A549 (cell line): ENCODE measurements at regions of chr17 and their contacts with region 1.

Region 1: DNA sequence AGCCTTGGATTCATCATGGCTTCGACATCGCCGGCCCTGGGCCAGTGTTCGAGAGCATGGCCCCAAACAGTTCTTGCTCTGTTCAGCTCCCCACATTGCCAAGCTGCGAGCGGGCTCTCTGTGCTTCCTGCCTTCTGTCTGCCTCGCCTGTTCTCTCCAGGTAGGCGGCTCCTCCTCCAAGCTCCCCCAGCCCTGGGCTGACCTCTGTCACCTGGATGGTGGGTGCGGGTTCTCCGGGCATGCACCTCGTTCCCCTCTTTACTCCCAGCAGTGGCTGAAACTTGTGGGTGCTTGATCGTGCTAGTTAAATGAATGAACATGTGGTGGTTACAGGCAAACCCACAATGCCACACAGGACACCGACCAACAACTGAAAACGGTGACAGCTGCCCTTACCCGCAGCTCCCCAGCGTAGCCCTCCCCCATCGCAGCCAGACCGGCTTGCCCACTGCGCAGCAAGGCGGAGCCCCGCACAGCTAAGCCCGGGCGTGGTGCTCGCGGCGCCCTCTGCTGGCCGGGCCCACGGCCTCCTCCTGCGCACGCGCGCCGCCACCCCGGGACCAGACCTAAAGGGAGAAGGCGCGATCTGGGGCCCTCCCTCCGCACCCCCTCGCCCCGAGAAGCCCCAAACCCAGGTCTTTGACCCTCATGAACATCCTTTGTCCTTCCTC is 23.0 kb upstream of the EIF1 start:
- DNase-seq: peak; percentile 89 to 100
- ATAC-seq: peak; percentile 72 to 91
- H3K4me3 ChIP-seq: peak overlapping the region; percentile 47
- H3K27ac ChIP-seq: peak overlapping the region; percentile 86 to 92
- H3K4me1 ChIP-seq: peaks cover 23% of the 10 kb centered on the region
- CTCF ChIP-seq: peak; percentile 98
- EP300 ChIP-seq: no peak
- POLR2A ChIP-seq: peak; percentile 74
- RAD21 ChIP-seq: peak in 1 of 2 experiments; percentile 46; a peak in 2 of 5 replicates

Region 2: DNA sequence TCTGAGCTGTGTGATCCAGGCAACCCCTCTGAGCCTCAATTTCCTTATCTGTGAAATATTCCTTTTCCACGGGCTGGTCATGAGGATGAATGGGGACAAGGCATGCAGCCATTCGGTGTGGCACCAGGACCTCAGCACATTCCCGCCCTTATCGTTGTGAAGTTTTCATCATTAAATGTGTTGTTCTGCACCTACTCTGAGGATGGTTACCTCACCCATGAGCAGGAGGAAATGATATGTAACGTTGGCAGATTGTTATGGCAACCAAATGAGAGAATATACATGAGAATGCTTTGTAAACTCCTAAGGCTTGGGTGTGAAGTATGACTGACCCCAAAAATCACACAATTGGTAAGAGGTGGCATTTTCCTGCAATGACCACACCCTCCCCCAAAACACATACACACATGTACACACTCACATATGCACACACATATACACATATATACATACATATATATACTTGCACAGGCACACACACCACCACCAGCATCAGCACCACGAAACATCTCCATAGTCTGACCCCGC is 1057.6 kb before region 1 on chr17:
- CTCF ChIA-PET with region 1: interaction called, 53 read pairs
- POLR2A ChIA-PET with region 1: no interaction called
- DNase-seq: no peak
- ATAC-seq: no peak
- H3K4me3 ChIP-seq: no peak overlapping the region
- H3K27ac ChIP-seq: no peak overlapping the region
- H3K4me1 ChIP-seq: no peaks in the 10 kb centered on the region
- CTCF ChIP-seq: no peak
- EP300 ChIP-seq: no peak
- POLR2A ChIP-seq: no peak
- RAD21 ChIP-seq: no peak

Region 3: DNA sequence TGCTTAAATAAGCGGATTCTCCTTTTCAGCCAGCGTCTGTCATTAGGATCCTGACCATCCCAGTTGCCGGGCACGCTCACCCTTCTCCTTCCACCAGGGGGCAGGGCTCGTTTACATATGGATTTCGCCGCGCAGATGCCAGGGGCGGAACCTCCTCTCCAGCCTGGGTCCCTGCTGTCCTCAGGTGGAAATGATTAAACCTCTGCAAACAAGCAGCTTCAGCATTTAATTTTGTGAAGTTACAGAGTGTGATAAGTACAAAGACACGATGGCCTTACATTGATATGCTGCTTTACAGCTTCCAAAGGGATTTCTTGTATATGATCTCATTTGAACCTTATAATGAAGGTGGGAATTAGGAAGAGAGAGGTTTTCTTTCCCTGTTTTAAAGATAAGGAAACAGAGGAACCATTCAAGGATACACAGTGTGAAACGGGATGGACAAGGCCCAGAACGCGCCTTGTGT is 862.1 kb before region 1 on chr17:
- CTCF ChIA-PET with region 1: interaction called, 282 read pairs
- POLR2A ChIA-PET with region 1: no interaction called
- DNase-seq: peak; percentile 88 to 96
- ATAC-seq: peak; percentile 99
- H3K4me3 ChIP-seq: no peak overlapping the region
- H3K27ac ChIP-seq: peak overlapping the region; percentile 27 to 56; a peak in 4 of 6 replicates
- H3K4me1 ChIP-seq: peaks cover 7% of the 10 kb centered on the region
- CTCF ChIP-seq: peak; percentile 98
- EP300 ChIP-seq: no peak
- POLR2A ChIP-seq: no peak
- RAD21 ChIP-seq: peak; percentile 100

Region 4: GRCh38 chr17:40862985-40863733 is 802.5 kb before region 1 on chr17:
- CTCF ChIA-PET with region 1: interaction called, 418 read pairs
- POLR2A ChIA-PET with region 1: no interaction called
- DNase-seq: no peak
- ATAC-seq: peak in 1 of 2 experiments; percentile 47; a peak in 3 of 6 replicates
- H3K4me3 ChIP-seq: no peak overlapping the region
- H3K27ac ChIP-seq: peak overlapping the region in 1 of 2 experiments; percentile 6; a peak in 1 of 6 replicates
- H3K4me1 ChIP-seq: peaks cover 15% of the 10 kb centered on the region; the same call in 2 of the 3 replicates
- CTCF ChIP-seq: no peak
- EP300 ChIP-seq: no peak
- POLR2A ChIP-seq: no peak
- RAD21 ChIP-seq: peak in 1 of 2 experiments; percentile 33; a peak in 1 of 5 replicates

Region 5: DNA sequence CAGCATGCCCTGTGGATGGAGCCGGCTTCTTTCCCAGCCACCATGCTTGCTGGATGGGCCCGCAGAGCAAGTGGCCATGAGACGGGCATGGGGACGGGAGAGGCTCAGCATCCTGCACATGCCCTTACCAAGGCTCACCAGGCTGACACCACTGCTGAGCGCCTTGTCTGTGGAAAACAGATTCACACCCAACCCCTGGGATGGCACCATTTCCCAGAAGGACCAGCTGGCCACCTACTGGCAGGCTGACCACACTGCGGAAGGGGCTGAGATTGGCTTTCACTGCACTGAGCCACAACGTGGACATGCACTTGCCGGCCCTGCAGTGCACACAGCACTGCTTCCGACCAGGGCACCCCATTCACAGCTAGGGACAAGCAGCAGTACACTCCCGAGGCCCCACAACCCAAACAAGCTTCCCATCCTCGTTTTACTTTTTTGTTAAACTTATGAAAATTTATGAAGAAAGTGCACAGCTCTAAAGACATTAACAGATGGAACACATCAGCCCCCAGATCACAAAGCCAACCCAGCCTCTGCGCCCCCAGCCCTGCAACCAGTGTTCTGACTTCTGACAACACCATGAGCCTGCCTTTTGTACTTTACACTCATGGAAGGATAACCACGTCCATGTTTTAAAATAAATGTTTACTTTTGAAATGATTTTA is 336.3 kb before region 1 on chr17:
- CTCF ChIA-PET with region 1: interaction called, 40 read pairs
- POLR2A ChIA-PET with region 1: no interaction called
- DNase-seq: peak; percentile 78 to 79
- ATAC-seq: peak; percentile 75 to 95
- H3K4me3 ChIP-seq: no peak overlapping the region
- H3K27ac ChIP-seq: peak overlapping the region in 1 of 2 experiments; percentile 44; a peak in 1 of 6 replicates
- H3K4me1 ChIP-seq: no peaks in the 10 kb centered on the region
- CTCF ChIP-seq: peak; percentile 73
- EP300 ChIP-seq: no peak
- POLR2A ChIP-seq: no peak
- RAD21 ChIP-seq: peak; percentile 88 to 95

Region 6: GRCh38 chr17:41521574-41522261 is 144.0 kb before region 1 on chr17:
- CTCF ChIA-PET with region 1: interaction called, 11 read pairs
- POLR2A ChIA-PET with region 1: no interaction called
- DNase-seq: peak; percentile 76 to 83
- ATAC-seq: peak; percentile 52 to 78; a peak in 5 of 6 replicates
- H3K4me3 ChIP-seq: no peak overlapping the region
- H3K27ac ChIP-seq: peak overlapping the region; percentile 60 to 82
- H3K4me1 ChIP-seq: peaks cover 29% of the 10 kb centered on the region
- CTCF ChIP-seq: no peak
- EP300 ChIP-seq: no peak
- POLR2A ChIP-seq: no peak
- RAD21 ChIP-seq: no peak

Region 7: DNA sequence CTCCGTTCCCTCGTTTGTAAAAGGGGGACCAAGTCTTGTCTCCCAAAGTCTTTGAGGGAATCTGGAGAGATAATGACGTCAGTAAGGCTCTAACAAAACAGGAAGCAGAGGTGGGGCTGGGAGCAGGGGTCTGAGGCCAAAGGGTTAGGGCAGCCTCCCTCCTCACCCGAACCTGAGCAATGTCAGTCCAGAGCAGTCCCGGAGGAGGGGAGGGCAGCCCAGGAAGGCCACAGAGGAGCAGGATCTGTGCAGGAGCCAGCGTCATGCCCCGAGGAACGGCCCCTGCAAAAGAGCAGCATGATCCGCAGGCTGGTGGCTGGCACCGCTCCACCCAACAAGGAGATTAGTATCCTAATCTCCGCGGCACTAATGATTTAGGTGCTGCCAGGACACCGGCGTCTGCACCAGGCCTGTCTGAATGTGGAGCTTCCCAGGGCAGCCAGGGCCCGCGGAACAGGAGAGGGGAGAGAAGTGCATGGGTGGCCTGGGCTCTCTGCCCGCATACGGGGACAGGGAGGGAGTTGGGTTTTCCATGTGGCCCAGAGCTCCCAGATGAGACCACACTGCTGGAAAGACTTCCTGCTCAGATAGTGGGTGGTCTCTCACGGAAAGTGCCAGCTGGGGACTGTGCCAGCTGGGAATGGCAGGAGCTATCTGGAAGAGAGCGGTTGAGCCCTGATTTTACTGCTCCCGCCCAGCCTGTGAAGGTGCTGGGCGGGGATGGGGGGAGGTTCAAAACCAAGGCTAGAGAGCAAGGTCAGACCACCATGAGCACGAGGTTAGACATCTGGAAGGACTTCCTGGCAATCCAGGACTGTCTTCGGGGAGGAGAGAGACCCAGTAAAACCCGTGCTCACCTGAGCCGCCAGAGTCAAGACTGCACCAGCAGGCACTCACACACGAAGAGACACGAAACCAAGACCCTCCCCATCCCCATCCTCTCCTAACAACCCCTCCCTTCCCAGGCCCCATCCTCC is 30.3 kb before region 1 on chr17:
- CTCF ChIA-PET with region 1: interaction called, 678 read pairs
- POLR2A ChIA-PET with region 1: no interaction called
- DNase-seq: no peak
- ATAC-seq: peak; percentile 27 to 47; a peak in 3 of 6 replicates
- H3K4me3 ChIP-seq: no peak overlapping the region
- H3K27ac ChIP-seq: no peak overlapping the region
- H3K4me1 ChIP-seq: no peaks in the 10 kb centered on the region
- CTCF ChIP-seq: no peak
- EP300 ChIP-seq: no peak
- POLR2A ChIP-seq: no peak
- RAD21 ChIP-seq: no peak

Region 8: DNA sequence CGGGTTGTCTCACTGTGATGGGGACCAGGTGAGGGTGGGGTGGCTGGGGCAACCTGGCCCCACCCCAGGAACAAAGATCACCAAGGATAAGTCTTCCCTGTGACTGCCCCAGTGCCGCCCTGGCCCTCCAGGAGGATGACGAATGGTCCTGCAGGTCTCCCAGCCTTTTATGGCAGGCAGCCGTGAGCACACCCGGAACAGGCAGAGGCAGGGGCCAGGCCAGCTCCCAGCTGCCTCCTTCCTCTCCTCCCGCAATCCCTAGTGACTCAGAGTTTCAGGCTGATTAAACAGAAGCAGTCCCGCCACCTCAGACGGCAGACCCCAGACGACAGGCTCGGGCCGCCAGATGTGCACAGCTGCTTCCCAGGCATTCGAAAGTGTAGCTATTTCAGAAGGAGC is 107.5 kb after region 1 on chr17:
- CTCF ChIA-PET with region 1: no interaction called
- POLR2A ChIA-PET with region 1: no interaction called
- DNase-seq: peak; percentile 89 to 90
- ATAC-seq: peak; percentile 46 to 58
- H3K4me3 ChIP-seq: 0 out of 3 replicates have a peak overlapping the region, but pooled peaks have one; percentile 7
- H3K27ac ChIP-seq: peak overlapping the region; percentile 89 to 93
- H3K4me1 ChIP-seq: peaks cover 67% of the 10 kb centered on the region
- CTCF ChIP-seq: no peak
- EP300 ChIP-seq: no peak
- POLR2A ChIP-seq: no peak
- RAD21 ChIP-seq: peak in 1 of 2 experiments; percentile 3; a peak in 1 of 5 replicates